PC-9 (cell line): ENCODE measurements at regions of chr3 and their contacts with region 1.

Region 1: DNA sequence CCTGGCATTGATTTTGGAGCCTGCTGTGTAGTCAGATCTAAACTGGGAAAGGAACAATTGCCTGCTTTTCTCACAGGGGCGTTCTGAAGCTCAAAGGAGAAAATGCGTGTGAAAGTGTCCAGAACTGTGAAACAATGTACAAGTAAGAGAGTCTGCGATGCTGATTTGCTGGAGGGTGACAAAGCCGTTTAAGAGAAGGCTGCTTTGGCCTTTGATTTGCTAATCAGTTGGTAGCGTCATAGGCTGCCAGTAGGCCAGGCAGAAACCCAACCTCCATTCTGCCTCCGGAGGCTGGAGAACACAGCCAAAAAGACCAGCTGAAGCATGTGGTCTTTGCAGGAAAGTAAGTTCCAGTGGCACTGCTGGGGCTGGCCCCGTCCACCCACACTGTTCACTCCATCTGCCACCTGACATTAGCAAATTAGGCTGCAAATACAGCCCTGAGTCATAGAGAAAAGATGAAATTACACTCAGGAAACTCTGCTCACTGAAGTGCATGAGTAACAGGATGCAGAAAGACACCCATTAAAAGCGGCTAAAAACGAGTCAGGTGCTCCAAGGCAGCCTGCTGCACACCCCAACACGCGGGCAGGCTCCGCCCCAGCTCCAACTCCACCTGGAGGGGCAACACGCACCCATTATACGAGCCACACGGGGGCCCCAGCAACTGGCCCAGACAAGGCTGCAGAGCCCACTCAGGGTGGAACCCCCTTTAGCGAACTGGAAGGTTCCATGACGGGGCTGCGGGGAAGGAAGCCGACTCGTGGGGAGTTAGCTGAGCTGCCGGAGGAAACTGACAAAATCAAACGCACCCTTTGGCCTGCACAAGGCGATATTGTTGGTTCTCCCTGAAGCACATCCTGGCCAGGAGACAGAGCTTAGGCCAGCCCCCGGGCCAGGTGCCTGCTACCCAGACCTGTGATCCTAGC is 31.6 kb downstream of the ZDHHC19 start:
- DNase-seq: peak in 1 of 2 experiments; percentile 29
- H3K4me3 ChIP-seq: no peak overlapping the region
- H3K27ac ChIP-seq: no peak overlapping the region
- H3K4me1 ChIP-seq: peaks cover 21% of the 10 kb centered on the region
- H3K27me3 ChIP-seq: no peaks in the 10 kb centered on the region
- CTCF ChIP-seq: no peak

Region 2: DNA sequence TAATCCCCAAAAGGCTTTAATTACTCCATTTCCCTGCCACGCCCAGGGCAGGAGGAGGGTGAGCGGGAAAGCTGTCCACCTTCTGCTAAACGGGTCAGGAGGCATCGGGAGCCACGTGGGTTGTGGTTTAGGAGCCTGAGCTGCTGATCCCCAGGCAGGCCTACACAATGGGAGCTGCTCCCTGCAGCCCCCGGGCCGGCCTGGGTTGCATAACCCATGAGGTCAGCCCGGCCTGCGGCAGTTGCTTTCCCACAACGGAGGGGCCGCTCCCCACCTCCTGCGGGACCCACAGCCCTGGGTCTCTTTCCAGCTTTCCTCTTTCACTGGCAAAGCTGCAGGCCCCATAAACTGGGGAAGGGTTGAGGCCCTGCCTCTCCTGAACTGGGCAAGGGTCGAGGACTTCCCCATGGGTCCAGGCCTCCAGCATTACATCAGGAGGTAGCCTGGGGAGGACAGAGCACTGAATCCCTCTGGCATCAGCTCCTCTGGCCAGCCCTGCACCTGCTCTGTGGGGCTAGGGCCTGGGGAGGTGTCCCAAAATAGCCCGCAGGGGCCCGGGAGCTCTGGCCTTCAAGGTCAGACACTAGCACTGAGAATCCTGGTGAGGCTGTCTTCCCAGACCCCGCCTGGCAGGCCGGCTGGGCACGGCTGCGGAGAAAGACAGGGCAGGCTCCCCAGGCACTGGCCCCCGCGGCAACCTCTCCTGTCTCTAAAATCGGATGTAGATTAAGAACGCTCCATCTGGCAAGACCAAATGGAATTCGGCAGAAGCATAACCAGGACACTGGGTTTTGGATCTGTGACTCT is 15.8 kb before region 1 on chr3:
- CTCF ChIA-PET with region 1: interaction called, 10 read pairs
- POLR2A ChIA-PET with region 1: no interaction called
- intact Hi-C with region 1: no loop called
- DNase-seq: peak; percentile 48 to 69
- H3K4me3 ChIP-seq: no peak overlapping the region
- H3K27ac ChIP-seq: no peak overlapping the region
- H3K4me1 ChIP-seq: peaks cover 33% of the 10 kb centered on the region
- H3K27me3 ChIP-seq: no peaks in the 10 kb centered on the region
- CTCF ChIP-seq: no peak

Region 3: GRCh38 chr3:196323701-196324100 is 144.1 kb after region 1 on chr3:
- CTCF ChIA-PET with region 1: no interaction called
- POLR2A ChIA-PET with region 1: interaction called, 12 read pairs
- intact Hi-C with region 1: no loop called
- DNase-seq: no peak
- H3K4me3 ChIP-seq: no peak overlapping the region
- H3K27ac ChIP-seq: no peak overlapping the region
- H3K4me1 ChIP-seq: no peaks in the 10 kb centered on the region
- H3K27me3 ChIP-seq: no peaks in the 10 kb centered on the region
- CTCF ChIP-seq: no peak; the same call in 1 of the 2 replicates

Region 4: GRCh38 chr3:196518966-196519717 is 339.5 kb after region 1 on chr3:
- CTCF ChIA-PET with region 1: no interaction called
- POLR2A ChIA-PET with region 1: no interaction called
- intact Hi-C with region 1: no loop called
- DNase-seq: peak; percentile 70 to 75
- H3K4me3 ChIP-seq: no peak overlapping the region
- H3K27ac ChIP-seq: no peak overlapping the region
- H3K4me1 ChIP-seq: peaks cover 8% of the 10 kb centered on the region
- H3K27me3 ChIP-seq: no peaks in the 10 kb centered on the region
- CTCF ChIP-seq: peak; percentile 97